HepG2 (cell line): ENCODE measurements at regions of chr20 and their contacts with region 1.

Region 1: GRCh38 chr20:13119583-13119982 is 101.5 kb upstream of the ISM1 start:
- DNase-seq: peak; percentile 84
- ATAC-seq: peak; percentile 87
- H3K4me3 ChIP-seq: no peak overlapping the region
- H3K27ac ChIP-seq: no peak overlapping the region
- H3K4me1 ChIP-seq: peaks cover 35% of the 10 kb centered on the region
- H3K27me3 ChIP-seq: no peaks in the 10 kb centered on the region
- CTCF ChIP-seq: peak; percentile 98
- EP300 ChIP-seq: no peak
- POLR2A ChIP-seq: no peak
- RAD21 ChIP-seq: peak; percentile 94

Region 2: DNA sequence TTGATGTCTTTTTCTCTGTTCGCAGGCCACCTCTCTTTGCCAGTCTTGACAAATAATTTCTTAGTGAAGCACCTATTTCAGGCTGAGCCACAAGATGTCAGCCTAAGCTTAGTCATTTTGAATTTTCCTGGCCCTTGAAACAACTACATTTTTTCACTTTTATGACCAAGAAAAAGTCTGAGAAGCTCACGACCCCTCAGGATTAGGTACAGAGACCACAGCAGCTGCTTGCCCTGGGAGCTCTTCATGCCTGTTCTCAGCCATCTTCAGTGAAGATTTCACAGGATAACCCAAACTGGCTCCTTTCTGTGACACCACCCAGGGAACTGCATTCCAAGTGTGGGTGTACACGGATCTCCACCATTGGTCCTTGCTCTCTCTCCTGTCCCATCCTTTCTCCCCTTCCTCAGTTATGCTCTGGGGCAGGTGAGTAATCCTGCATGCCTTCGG is 149.2 kb before region 1 on chr20:
- CTCF ChIA-PET with region 1: interaction called, 10 read pairs
- POLR2A ChIA-PET with region 1: no interaction called
- in situ Hi-C with region 1: no loop called
- intact Hi-C with region 1: no loop called
- DNase-seq: peak; percentile 74
- ATAC-seq: peak; percentile 80
- H3K4me3 ChIP-seq: no peak overlapping the region
- H3K27ac ChIP-seq: no peak overlapping the region
- H3K4me1 ChIP-seq: peaks cover 30% of the 10 kb centered on the region
- H3K27me3 ChIP-seq: no peaks in the 10 kb centered on the region
- CTCF ChIP-seq: peak; percentile 91
- EP300 ChIP-seq: no peak
- POLR2A ChIP-seq: no peak
- RAD21 ChIP-seq: peak; percentile 95

Region 3: DNA sequence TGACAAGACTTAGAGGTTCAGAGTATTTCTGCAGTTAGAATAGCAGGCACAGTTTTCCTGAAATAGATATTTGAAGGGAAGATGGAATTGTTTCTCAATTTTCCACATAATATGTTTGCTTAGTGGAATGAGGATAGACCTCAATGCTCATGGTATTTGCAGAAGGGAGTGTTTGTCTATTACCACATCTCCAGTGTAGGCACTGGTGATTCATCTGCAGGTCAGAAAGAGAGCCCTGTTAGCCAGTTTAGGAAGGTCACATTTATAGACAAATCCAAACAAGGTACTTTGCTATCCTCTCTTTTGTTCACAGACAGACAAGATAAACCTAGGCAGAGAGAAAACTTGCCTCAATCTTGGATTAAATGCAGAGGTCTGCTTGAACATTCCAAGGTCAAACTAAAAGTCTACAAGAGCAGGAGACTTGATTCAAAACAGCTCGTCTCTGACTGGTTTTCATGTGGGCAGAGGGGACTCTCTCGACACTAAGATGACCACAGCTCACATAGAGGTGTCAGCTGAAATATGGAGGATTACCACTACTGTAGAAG is 124.3 kb after region 1 on chr20:
- CTCF ChIA-PET with region 1: no interaction called
- POLR2A ChIA-PET with region 1: interaction called, 6 read pairs
- in situ Hi-C with region 1: no loop called
- intact Hi-C with region 1: loop called (anchors 1 kb)
- DNase-seq: peak; percentile 100
- ATAC-seq: peak; percentile 99
- H3K4me3 ChIP-seq: no peak overlapping the region
- H3K27ac ChIP-seq: peak overlapping the region; percentile 37
- H3K4me1 ChIP-seq: peaks cover 65% of the 10 kb centered on the region
- H3K27me3 ChIP-seq: no peaks in the 10 kb centered on the region
- CTCF ChIP-seq: no peak
- EP300 ChIP-seq: peak; percentile 97 to 99
- POLR2A ChIP-seq: peak in 1 of 2 experiments; percentile 57; a peak in 1 of 4 replicates
- RAD21 ChIP-seq: no peak

Region 4: DNA sequence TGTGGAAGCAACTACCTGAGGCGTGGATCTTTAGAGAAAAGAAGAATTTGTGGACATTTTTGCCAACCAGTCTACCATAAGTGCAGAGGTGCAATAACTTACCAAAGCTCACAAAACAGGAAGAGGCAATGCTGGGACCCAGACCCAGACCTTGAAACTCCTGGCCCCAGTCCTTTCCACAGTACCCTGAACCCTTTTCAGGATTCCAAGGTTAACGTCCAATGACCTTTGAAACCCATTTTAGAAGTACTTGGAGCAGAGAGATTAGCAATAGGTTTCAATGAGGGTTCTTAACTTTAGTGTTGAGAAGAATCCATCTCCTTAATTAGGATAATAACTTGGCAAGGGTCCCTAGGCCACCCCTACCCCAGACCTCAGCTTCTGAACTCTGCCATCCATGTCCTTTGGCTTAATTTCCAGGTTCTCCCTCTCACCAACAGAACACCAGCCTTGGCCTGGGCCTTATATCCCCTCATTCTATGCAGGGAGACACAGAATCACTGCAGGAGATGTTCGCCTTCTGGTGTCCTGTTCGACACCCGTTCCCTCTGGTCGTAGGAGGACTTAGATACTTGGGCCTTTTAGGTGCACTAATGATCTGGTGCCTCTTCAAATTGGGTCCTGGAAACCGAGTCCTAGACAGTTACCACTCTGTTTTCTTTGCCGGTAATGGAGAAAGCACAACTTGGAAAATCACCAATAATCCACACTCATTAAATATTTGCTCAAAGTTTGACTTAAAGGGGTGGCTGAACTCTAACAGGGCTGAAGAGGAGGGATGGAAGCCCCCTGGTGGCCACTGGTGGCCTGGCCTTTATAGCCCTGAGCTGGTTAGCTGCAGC is 142.1 kb after region 1 on chr20:
- CTCF ChIA-PET with region 1: interaction called, 57 read pairs
- POLR2A ChIA-PET with region 1: interaction called, 6 read pairs
- in situ Hi-C with region 1: no loop called
- intact Hi-C with region 1: loop called (anchors 1 kb)
- DNase-seq: peak; percentile 86
- ATAC-seq: peak; percentile 99
- H3K4me3 ChIP-seq: no peak overlapping the region
- H3K27ac ChIP-seq: no peak overlapping the region
- H3K4me1 ChIP-seq: peaks cover 32% of the 10 kb centered on the region
- H3K27me3 ChIP-seq: no peaks in the 10 kb centered on the region
- CTCF ChIP-seq: peak; percentile 96
- EP300 ChIP-seq: 0 out of 4 replicates have a peak, but pooled peaks of 1 of the 2 experiments have one; percentile 39
- POLR2A ChIP-seq: no peak
- RAD21 ChIP-seq: peak; percentile 95

Region 5: GRCh38 chr20:13325033-13325432 is 205.4 kb after region 1 on chr20:
- CTCF ChIA-PET with region 1: no interaction called
- POLR2A ChIA-PET with region 1: no interaction called
- in situ Hi-C with region 1: no loop called
- intact Hi-C with region 1: loop called (anchors 1 kb)
- DNase-seq: peak; percentile 74
- ATAC-seq: peak; percentile 99
- H3K4me3 ChIP-seq: no peak overlapping the region
- H3K27ac ChIP-seq: no peak overlapping the region
- H3K4me1 ChIP-seq: peaks cover 29% of the 10 kb centered on the region
- H3K27me3 ChIP-seq: no peaks in the 10 kb centered on the region
- CTCF ChIP-seq: peak; percentile 98
- EP300 ChIP-seq: no peak
- POLR2A ChIP-seq: no peak
- RAD21 ChIP-seq: peak; percentile 99

Region 6: GRCh38 chr20:13546497-13547131 is 427.0 kb after region 1 on chr20:
- CTCF ChIA-PET with region 1: interaction called, 19 read pairs
- POLR2A ChIA-PET with region 1: interaction called, 4 read pairs
- in situ Hi-C with region 1: loop called (anchors 5 kb)
- intact Hi-C with region 1: loop called (anchors 1 kb)
- DNase-seq: peak; percentile 83
- ATAC-seq: peak; percentile 94
- H3K4me3 ChIP-seq: no peak overlapping the region
- H3K27ac ChIP-seq: no peak overlapping the region
- H3K4me1 ChIP-seq: no peaks in the 10 kb centered on the region
- H3K27me3 ChIP-seq: no peaks in the 10 kb centered on the region
- CTCF ChIP-seq: peak; percentile 94
- EP300 ChIP-seq: no peak
- POLR2A ChIP-seq: no peak
- RAD21 ChIP-seq: peak; percentile 97